SK-MEL-5 (cell line): ENCODE measurements at regions of chr15 and their contacts with region 1.

Region 1: DNA sequence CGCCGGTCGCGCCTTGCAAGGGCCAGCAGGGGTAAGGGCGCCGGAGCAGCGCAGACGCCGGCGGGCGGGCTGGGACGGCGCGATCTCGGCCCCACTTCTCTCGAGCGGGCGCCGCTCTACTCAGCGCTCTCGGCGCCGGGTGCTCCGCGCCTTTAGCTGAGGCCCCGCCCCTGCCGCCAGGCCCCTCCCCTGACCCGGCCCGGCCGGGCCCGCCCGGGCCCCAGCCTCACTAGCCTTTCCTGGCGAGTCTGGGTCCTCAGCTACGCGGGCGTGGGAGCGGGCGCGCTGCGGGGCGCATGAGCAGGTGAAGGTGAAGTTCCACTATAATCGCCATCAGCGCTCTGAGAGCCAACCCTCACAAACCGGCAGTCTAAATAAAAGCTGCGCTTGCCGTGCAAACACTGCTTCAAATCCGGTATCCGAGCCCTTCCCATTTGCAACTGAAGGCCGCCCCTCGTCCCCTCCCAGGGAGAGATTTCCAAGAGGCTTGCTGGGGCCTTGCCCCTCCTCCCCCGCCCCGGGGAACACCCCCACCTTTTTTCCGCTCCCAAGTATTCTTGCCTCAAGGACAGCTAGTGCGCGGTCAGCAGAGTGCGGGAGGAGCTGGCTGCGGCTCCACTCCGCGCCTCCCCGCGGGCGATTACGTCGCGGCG is at the start of gene RPP25:
- DNase-seq: no peak
- total RNA-seq, gene RPP25: 1.4 and 1.9 TPM in 2 replicates

Region 2: GRCh38 chr15:74716644-74717043 is 240.1 kb before region 1 on chr15:
- in situ Hi-C with region 1: no loop called
- DNase-seq: peak; percentile 49

Region 3: DNA sequence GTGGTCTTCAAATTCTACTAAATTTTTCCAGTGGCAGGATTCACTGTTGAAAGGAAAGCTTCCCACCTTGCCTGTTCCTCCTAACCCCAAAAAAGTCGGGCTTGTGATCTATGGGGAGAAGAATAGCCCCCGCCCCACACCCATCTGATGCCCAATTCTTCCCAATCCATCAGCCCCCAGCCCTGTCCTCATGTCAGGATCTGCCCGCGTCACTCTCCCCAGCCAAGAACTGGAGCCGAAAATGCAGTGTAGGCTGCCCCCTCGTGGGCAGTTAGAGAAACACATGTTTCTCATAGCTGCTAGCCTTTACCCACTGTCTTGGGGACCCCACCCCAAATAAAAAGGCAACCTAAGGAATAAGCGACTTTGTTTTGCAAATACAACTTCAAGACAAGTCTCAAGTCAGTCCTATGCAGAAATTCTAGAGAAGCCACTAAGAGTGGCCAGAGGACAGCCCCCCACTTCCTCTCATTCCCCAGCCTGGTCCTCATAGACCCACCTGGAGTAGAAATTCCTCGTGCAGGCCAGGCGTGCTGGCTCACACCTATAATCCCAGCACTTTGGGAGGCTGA is 187.9 kb before region 1 on chr15:
- in situ Hi-C with region 1: loop called (anchors 25 kb)
- DNase-seq: peak; percentile 74